ENCODE measurements at regions of chr16 and their contacts with region 1.

Region 1: DNA sequence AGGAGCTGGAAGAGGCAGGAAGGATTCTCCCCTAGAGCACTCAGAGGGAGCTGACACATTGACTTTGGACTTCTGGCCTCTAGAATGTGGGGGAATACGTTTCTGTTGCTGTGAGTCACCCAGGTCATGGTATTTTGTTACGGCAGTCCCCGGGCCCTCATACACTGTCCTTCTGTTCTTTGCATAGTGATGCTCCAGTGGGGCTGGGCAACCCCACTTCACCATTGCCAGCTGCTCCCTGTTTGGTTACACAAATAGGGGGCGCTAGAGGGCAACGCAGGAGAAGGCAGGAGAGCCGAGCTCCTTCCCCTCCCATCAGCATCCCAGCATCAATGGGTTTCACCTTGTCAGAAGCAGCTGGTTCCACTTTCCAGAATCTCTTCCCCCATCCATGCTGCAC is 257.7 kb upstream of the FOXF1 start:
- DNase-seq: peak; percentile 65
- ATAC-seq: peak; percentile 56
- H3K4me3 ChIP-seq: no peak overlapping the region
- H3K27ac ChIP-seq: peak overlapping the region; percentile 94
- H3K4me1 ChIP-seq: peaks cover 21% of the 10 kb centered on the region
- H3K27me3 ChIP-seq: no peaks in the 10 kb centered on the region
- CTCF ChIP-seq: peak; percentile 47
- POLR2A ChIP-seq: no peak
- RAD21 ChIP-seq: peak; percentile 37

Region 2: GRCh38 chr16:85916141-85916890 is 336.3 kb before region 1 on chr16:
- CTCF ChIA-PET with region 1: no interaction called
- POLR2A ChIA-PET with region 1: no interaction called
- dilution Hi-C with region 1: no loop called
- in situ Hi-C with region 1: no loop called
- intact Hi-C with region 1: no loop called
- DNase-seq: no peak
- ATAC-seq: no peak
- H3K4me3 ChIP-seq: no peak overlapping the region
- H3K27ac ChIP-seq: no peak overlapping the region
- H3K4me1 ChIP-seq: peaks cover 4% of the 10 kb centered on the region; the same call in 1 of the 2 replicates
- H3K27me3 ChIP-seq: peaks cover 43% of the 10 kb centered on the region
- CTCF ChIP-seq: no peak
- POLR2A ChIP-seq: no peak
- RAD21 ChIP-seq: no peak

Region 3: DNA sequence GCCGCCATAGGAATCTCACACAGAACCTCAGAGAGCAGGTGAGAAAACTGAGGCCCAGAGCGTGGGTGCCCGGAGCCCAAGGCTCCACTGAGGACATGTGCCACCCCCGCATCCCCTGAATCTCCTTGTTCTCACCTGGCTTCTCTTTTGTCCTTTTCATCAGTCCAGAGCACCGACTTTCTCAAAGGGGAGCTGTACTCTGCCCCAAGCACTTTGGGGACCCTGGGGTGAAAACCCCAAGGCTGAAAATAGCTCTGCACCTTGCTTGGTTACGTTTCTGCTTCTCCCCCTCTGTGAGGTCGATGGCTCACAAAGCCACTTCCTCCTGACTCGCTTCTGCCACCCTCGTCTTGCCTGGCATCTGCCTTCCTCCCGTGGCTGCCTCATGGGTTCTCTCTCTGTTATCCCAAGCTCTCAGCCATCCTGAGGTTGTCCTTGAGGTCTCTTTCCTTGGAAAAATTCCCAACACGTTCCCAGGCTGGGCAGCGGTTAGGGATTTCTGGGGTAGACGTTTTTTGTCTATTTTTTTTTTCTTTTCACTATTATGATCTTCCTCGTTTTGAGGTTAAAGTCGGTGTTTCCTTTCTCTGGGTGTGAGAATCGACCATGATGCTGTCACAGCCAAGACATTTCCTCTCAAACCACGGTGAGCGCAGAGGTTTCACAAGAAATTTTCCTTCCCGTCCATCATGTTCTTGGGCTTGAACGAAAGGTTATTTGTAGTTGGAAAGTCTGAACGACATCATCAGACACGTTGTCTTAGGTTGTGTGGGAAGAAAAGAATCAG is 316.4 kb before region 1 on chr16:
- CTCF ChIA-PET with region 1: no interaction called
- POLR2A ChIA-PET with region 1: no interaction called
- dilution Hi-C with region 1: no loop called
- in situ Hi-C with region 1: no loop called
- intact Hi-C with region 1: no loop called
- DNase-seq: no peak
- ATAC-seq: no peak
- H3K4me3 ChIP-seq: no peak overlapping the region
- H3K27ac ChIP-seq: no peak overlapping the region
- H3K4me1 ChIP-seq: no peaks in the 10 kb centered on the region
- H3K27me3 ChIP-seq: peaks cover 73% of the 10 kb centered on the region
- CTCF ChIP-seq: no peak
- POLR2A ChIP-seq: no peak
- RAD21 ChIP-seq: no peak

Region 4: DNA sequence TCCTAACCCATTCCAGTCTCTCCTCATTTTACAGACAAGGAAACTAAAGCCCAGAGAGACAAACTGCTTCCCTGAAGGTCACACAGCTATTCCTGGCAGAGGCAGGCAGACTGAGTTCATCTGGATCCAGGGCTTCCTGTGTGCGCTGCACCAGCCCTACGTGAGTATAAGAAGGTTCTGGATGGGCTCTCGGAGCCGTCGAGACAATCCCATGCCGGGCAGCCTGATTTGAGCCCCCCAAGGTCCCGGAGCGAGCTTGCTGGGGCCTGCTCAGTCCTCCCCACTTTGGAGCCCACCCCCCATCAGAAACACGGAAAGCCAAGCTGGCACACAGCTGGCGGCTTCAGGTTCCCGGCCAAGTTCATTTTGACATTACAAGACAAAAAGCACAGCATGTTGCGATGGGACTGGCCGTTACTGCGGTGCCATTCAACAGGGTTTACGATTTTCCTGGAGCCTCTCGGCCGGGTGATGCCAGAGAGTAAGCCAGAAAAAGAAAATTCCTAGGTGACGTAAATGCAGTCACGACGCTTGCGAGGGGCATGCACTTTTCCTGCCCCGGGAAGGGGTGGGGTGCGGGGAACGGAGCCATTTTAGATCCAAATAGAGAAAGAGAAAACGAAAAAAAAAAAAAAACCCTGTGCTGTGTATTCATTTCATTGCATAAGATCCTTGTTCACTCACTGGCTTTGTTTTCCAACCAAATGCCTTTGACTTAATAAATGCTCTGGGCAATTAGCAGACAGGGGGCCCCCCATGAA is 90.6 kb after region 1 on chr16:
- CTCF ChIA-PET with region 1: no interaction called
- POLR2A ChIA-PET with region 1: no interaction called
- dilution Hi-C with region 1: no loop called
- in situ Hi-C with region 1: no loop called
- intact Hi-C with region 1: loop called (anchors 1 kb)
- DNase-seq: peak; percentile 89
- ATAC-seq: peak; percentile 92
- H3K4me3 ChIP-seq: no peak overlapping the region
- H3K27ac ChIP-seq: peak overlapping the region; percentile 96
- H3K4me1 ChIP-seq: peaks cover 21% of the 10 kb centered on the region
- H3K27me3 ChIP-seq: no peaks in the 10 kb centered on the region
- CTCF ChIP-seq: no peak
- POLR2A ChIP-seq: peak; percentile 39; the same call in 1 of the 2 replicates
- RAD21 ChIP-seq: no peak

Region 5: GRCh38 chr16:86457501-86458148 is 205.0 kb after region 1 on chr16:
- CTCF ChIA-PET with region 1: interaction called, 7 read pairs
- POLR2A ChIA-PET with region 1: no interaction called
- dilution Hi-C with region 1: no loop called
- in situ Hi-C with region 1: no loop called
- intact Hi-C with region 1: loop called (anchors 5 kb)
- DNase-seq: peak; percentile 99
- ATAC-seq: peak; percentile 61
- H3K4me3 ChIP-seq: no peak overlapping the region
- H3K27ac ChIP-seq: peak overlapping the region; percentile 97
- H3K4me1 ChIP-seq: peaks cover 28% of the 10 kb centered on the region
- H3K27me3 ChIP-seq: no peaks in the 10 kb centered on the region
- CTCF ChIP-seq: no peak
- POLR2A ChIP-seq: peak; percentile 72
- RAD21 ChIP-seq: no peak; the same call in 1 of the 2 replicates

Region 6: GRCh38 chr16:87571136-87571867 is 1318.7 kb after region 1 on chr16:
- CTCF ChIA-PET with region 1: no interaction called
- POLR2A ChIA-PET with region 1: no interaction called
- dilution Hi-C with region 1: no loop called
- in situ Hi-C with region 1: no loop called
- intact Hi-C with region 1: no loop called
- DNase-seq: peak; percentile 53
- ATAC-seq: peak; percentile 95
- H3K4me3 ChIP-seq: no peak overlapping the region
- H3K27ac ChIP-seq: no peak overlapping the region
- H3K4me1 ChIP-seq: peaks cover 2% of the 10 kb centered on the region; the same call in 1 of the 2 replicates
- H3K27me3 ChIP-seq: peaks cover 22% of the 10 kb centered on the region
- CTCF ChIP-seq: peak; percentile 64
- POLR2A ChIP-seq: no peak
- RAD21 ChIP-seq: peak; percentile 74